Motor neuron (in vitro differentiated cells): ENCODE measurements at regions of chr20 and their contacts with region 1.

Region 1: DNA sequence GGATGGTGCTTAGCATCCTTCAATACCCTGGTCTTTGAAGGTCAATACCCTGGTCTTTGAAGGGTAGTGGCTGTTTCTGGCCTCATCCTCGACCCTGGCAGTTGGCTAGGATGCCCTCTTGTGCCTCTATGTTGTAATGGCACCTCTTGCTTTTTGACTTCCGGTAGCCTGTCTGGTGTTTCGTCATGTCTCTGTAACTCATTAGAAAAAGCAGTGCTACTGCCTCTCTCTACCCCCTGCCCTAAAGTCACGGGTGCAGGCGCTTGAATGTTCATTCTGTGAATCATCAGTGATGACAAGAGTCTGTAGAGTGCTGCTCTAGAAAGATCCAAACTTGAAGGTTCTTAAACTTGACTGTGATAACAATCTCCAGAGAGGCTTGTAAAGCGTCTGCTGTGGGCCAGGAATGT is 28.3 kb downstream of the RSPO4 start:
- ATAC-seq: peak in 5 of 8 experiments; percentile 18 to 98 (median 72)
- H3K4me3 ChIP-seq: no peak overlapping the region
- H3K27ac ChIP-seq: no peak overlapping the region
- H3K4me1 ChIP-seq: no peaks in the 10 kb centered on the region

Region 2: DNA sequence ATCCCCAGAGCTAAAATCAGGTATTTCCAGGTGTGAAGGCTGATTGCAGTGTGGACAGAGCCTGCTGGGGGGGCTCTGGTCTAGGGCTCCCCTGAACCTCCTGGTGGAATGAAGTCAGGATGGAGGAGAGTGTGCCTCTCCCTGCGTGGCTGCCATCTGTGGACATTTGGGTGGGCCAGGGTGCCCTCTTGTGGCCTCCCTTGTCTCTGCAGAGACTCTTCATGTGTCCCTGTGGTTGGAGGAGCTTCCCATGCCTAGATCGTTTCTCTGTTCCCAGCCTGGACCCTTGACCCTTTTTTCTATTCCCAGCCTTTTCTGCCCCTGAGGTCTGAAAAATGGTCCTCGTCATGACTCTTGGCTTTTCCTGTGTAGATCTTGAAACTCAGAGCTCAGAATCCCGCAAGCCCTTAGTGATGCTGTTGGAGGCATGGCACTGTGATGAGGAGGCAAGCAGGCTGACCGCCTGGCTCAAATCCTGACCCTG is 134.7 kb after region 1 on chr20:
- in situ Hi-C with region 1: loop called in 1 of 9 experiments (anchors 10 kb)
- ATAC-seq: peak in 6 of 8 experiments; percentile 43 to 98 (median 84)
- H3K4me3 ChIP-seq: no peak overlapping the region
- H3K27ac ChIP-seq: no peak overlapping the region
- H3K4me1 ChIP-seq: no peaks in the 10 kb centered on the region

Region 3: DNA sequence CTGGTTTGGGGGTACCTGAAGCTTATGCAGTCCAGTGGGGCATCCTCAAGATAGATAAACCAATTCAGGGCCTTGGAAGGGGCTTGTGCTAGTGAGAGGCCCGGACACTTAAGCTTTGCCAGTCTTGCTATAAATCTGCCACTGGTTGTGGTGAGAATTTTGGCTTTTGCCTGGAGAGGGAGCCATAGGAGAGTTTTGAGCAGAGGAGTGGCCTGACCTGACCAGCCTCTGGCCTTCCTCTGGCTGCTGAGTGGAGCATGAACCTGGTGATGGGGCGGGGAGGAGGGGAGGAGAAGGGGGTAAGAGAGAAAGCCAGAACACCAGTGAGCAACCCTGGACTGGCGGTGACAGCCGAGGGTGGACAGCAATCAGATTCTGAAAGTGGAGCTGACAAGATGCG is 203.9 kb after region 1 on chr20:
- in situ Hi-C with region 1: no loop called
- ATAC-seq: peak in 4 of 8 experiments; percentile 23 to 56 (median 54)
- H3K4me3 ChIP-seq: no peak overlapping the region
- H3K27ac ChIP-seq: no peak overlapping the region
- H3K4me1 ChIP-seq: no peaks in the 10 kb centered on the region